ENCODE measurements at regions of chr12 and their contacts with region 1.

Region 1: GRCh38 chr12:31959161-31959700 is at the start of gene RESF1:
- DNase-seq: peak; percentile 96
- H3K4me3 Mint-ChIP-seq: peak within 1 kb of the TSS; percentile 93
- H3K27ac Mint-ChIP-seq: peak within 1 kb of the TSS; percentile 99
- H3K4me1 Mint-ChIP-seq: peaks cover 56% of the 10 kb centered on the region
- H3K27me3 Mint-ChIP-seq: no peaks in the 10 kb centered on the region
- total RNA-seq, gene RESF1: 51.1 and 55.5 TPM in 2 replicates

Region 2: GRCh38 chr12:31682136-31682962 is 276.9 kb before region 1 on chr12:
- intact Hi-C with region 1: loop called (anchors 1 kb)
- DNase-seq: peak; percentile 91
- H3K4me3 Mint-ChIP-seq: no peak overlapping the region
- H3K27ac Mint-ChIP-seq: peak overlapping the region; percentile 54
- H3K4me1 Mint-ChIP-seq: peaks cover 10% of the 10 kb centered on the region
- H3K27me3 Mint-ChIP-seq: no peaks in the 10 kb centered on the region

Region 3: GRCh38 chr12:31804185-31804504 is 155.1 kb before region 1 on chr12:
- intact Hi-C with region 1: loop called (anchors 5 kb)
- DNase-seq: no peak
- H3K4me3 Mint-ChIP-seq: peak overlapping the region; percentile 30
- H3K27ac Mint-ChIP-seq: no peak overlapping the region
- H3K4me1 Mint-ChIP-seq: peaks cover 32% of the 10 kb centered on the region
- H3K27me3 Mint-ChIP-seq: no peaks in the 10 kb centered on the region

Region 4: GRCh38 chr12:31928246-31929026 is 30.8 kb before region 1 on chr12:
- intact Hi-C with region 1: loop called (anchors 2 kb)
- DNase-seq: peak; percentile 78
- H3K4me3 Mint-ChIP-seq: peak overlapping the region; percentile 83
- H3K27ac Mint-ChIP-seq: peak overlapping the region; percentile 90
- H3K4me1 Mint-ChIP-seq: peaks cover 25% of the 10 kb centered on the region
- H3K27me3 Mint-ChIP-seq: no peaks in the 10 kb centered on the region

Region 5: DNA sequence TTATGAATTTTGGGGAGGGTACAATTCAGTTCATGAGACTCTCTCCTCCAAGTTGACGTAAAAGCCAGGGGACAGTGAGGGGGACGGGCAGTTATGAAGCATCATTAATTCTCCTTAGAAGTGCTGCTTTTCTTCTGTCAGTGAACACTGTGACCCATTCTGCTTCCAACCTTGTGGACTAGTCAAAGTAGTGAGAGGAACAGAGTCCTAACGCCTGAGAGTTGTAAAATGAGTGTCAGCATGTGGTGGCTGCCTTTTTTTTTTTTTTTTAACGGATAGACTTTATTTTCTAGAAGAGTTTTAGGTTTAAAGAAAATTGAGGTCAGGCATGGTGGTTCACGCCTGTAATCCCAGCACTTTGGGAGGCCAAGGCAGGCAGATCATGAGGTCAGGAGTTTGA is 15.4 kb after region 1 on chr12:
- intact Hi-C with region 1: no loop called
- DNase-seq: no peak
- H3K4me3 Mint-ChIP-seq: no peak overlapping the region
- H3K27ac Mint-ChIP-seq: no peak overlapping the region
- H3K4me1 Mint-ChIP-seq: peaks cover 2% of the 10 kb centered on the region
- H3K27me3 Mint-ChIP-seq: no peaks in the 10 kb centered on the region

Region 6: GRCh38 chr12:32062881-32063280 is 103.7 kb after region 1 on chr12:
- intact Hi-C with region 1: loop called (anchors 1 kb)
- DNase-seq: no peak
- H3K4me3 Mint-ChIP-seq: no peak overlapping the region
- H3K27ac Mint-ChIP-seq: no peak overlapping the region
- H3K4me1 Mint-ChIP-seq: peaks cover 11% of the 10 kb centered on the region
- H3K27me3 Mint-ChIP-seq: no peaks in the 10 kb centered on the region

Region 7: DNA sequence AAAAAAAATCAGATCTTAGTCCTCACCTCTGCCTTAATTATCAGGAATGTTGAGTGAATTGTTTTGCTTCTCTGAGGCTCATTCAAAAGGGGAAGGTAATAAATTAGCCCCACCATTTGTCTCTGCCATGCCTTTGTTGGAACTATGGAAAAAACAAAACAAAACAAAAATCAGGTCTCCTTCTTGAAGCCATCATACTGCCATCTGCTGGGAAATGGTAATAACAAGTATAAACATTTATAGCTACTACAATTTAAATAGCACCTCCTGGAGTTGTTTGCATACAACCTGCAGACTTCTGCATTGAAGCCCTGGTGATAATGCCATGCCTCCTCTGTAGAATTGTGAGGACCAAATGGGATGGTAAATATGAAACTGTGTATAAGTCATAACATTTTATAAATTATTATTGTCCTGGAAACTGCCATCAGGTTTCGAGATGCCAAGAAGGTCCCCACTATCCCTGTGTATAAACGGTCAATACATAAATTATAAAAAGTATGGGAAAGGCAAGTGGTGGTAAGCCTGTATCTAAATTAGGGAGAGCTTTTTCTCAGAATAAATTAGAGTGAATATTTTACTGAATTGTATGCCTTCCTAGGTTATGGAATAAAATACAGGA is 352.9 kb after region 1 on chr12:
- intact Hi-C with region 1: loop called (anchors 5 kb)
- DNase-seq: peak; percentile 63
- H3K4me3 Mint-ChIP-seq: no peak overlapping the region
- H3K27ac Mint-ChIP-seq: no peak overlapping the region
- H3K4me1 Mint-ChIP-seq: peaks cover 3% of the 10 kb centered on the region
- H3K27me3 Mint-ChIP-seq: peaks cover 2% of the 10 kb centered on the region